Posterior vena cava (tissue), 2 donors: ENCODE measurements at regions of chr4 and their contacts with region 1.

Region 1: DNA sequence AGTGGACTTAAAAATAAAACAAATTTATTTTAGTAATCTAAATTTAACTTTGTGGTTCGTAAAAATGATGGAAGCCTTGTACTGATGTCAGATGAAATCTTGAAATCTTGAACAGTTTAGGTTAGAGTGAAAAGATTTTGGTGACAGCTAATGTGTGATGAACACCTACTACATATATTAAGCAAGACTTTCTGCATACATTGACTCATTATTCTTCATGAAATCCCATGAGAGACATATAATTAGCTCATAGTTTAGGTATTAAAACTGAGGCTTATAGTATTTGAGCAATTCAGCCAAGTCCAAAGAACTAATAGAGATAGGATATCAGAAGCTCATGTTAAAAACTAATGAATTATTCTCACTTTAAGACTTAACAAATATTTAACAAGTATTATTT is 66.9 kb upstream of the PCDH7 start:
- DNase-seq: no peak

Region 2: DNA sequence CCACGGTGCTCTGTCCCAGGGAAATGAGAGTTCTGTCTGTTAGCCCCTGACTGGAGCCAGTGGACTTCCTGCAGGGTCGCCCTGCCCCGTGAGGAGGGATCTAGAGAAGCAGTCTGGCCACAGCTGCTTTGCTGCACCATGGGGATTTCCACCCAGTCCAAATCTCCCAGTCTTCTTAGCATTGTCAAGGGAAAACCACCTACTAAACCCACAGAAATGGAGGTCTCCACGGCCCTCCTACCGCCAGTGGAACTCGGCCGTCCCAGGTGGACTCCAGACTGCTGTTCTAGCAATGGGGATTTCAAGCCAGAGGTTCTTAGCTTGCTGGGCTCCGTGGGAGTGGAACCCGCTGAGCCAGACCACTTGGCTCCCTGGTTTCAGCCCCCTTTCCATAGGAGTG is 66.4 kb before region 1 on chr4:
- intact Hi-C with region 1: loop called in 1 of 2 experiments (anchors 2 kb)
- DNase-seq: peak; percentile 60

Region 3: DNA sequence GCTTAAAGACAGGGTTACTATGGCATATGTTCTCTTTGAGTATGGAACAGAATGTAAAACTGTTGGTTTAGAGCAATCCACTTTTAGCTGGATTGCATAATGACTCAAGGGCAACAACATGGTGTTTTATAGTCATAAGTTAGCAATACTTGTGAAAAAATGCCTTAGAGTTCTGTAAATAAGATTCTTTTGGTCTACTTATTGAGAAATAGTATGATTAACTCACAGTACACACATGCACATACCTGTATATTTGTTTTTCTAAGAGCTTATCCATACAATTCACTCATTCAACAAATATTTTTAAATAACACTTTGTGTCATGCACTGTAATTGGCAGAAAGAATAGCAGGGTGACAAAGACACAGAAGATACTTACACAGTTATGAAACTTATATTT is 1482.4 kb after region 1 on chr4:
- intact Hi-C with region 1: no loop called
- DNase-seq: no peak